Right cardiac atrium (tissue), 5 donors: ENCODE measurements at regions of chr10 and their contacts with region 1.

Region 1: DNA sequence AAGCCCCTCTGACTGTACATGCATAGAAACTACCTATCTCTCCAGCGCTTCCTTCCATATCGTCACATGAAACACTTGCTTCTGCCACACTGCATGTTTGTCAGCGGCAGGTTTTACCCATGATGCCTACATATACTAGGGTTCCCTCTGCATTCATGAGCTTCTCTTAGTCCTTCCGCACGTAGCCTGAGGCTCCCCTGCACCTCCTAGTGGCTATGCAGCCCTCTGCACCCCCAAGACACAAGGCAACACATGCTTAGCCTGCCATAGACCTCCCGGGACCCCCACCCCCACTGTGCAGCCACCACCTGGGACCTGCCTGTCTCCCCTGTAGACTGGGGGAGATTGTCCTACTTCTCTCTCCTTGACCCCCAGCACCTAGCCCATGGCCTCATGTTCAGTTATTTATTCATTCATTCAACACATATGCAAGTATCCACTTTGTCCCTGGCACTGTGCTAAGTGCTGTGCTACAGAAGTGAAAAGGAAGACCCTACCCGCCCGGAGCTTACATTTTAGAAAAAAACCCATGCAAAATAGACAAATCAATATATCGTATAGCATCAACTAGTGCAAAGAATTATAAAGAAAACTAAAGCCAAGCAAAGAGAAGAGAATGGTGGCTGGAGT is 23.5 kb downstream of the TMEM273 start:
- DNase-seq: peak in 1 of 3 donors; percentile 77
- ATAC-seq: peak; percentile 74 to 76
- H3K4me3 ChIP-seq: no peak overlapping the region
- H3K27ac ChIP-seq: no peak overlapping the region
- H3K4me1 ChIP-seq: no peaks in the 10 kb centered on the region
- H3K27me3 ChIP-seq: no peaks in the 10 kb centered on the region

Region 2: GRCh38 chr10:48551861-48552591 is 612.6 kb before region 1 on chr10:
- intact Hi-C with region 1: loop called in 1 of 4 experiments (anchors 10 kb)
- DNase-seq: peak; percentile 37 to 78 (median 74)
- ATAC-seq: peak; percentile 56 to 62
- H3K4me3 ChIP-seq: no peak overlapping the region
- H3K27ac ChIP-seq: no peak overlapping the region
- H3K4me1 ChIP-seq: no peaks in the 10 kb centered on the region
- H3K27me3 ChIP-seq: no peaks in the 10 kb centered on the region

Region 3: GRCh38 chr10:48976196-48976595 is 188.5 kb before region 1 on chr10:
- intact Hi-C with region 1: loop called in 3 of 4 experiments (anchors 5 kb)
- DNase-seq: no peak
- ATAC-seq: peak; percentile 45 to 56
- H3K4me3 ChIP-seq: no peak overlapping the region
- H3K27ac ChIP-seq: no peak overlapping the region
- H3K4me1 ChIP-seq: no peaks in the 10 kb centered on the region
- H3K27me3 ChIP-seq: no peaks in the 10 kb centered on the region

Region 4: DNA sequence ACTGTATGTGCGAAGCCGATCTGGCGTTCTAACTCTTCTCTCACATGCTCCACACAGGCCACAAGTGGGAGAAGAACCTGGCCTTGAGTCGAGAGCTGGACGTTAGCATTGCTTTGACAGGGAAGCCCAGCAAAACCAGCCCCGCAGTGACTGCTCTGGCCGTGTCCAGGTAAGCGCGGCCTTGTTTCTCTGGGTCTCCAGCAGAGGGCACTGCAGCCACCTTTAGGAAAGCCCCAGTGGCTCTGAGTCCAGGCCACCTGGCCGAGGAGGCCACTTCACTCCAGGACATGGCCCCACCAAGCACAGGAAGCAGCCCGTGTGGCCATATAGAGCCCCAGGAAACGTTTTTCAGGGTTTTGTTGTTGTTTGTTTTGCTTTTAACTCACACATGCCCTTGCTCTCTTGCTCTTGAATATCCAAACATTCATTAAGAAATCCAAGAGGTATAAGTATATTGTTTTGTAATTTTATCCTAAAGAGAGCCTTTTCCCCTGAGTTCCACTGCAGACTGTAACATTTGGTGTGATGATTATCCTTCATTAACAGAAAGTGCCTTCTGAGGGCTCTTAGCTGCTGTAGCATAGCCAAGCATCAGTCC is 183.3 kb before region 1 on chr10:
- intact Hi-C with region 1: loop called (anchors 5 kb)
- DNase-seq: peak; percentile 61 to 83 (median 81)
- ATAC-seq: peak; percentile 75 to 88
- H3K4me3 ChIP-seq: no peak overlapping the region
- H3K27ac ChIP-seq: no peak overlapping the region
- H3K4me1 ChIP-seq: no peaks in the 10 kb centered on the region
- H3K27me3 ChIP-seq: no peaks in the 10 kb centered on the region

Region 5: GRCh38 chr10:49280001-49280408 is 115.3 kb after region 1 on chr10:
- intact Hi-C with region 1: no loop called
- DNase-seq: no peak
- ATAC-seq: no peak
- H3K4me3 ChIP-seq: no peak overlapping the region
- H3K27ac ChIP-seq: no peak overlapping the region
- H3K4me1 ChIP-seq: peaks cover 10% of the 10 kb centered on the region
- H3K27me3 ChIP-seq: no peaks in the 10 kb centered on the region